Activated naive CD4-positive, alpha-beta T cell treated with anti-CD3 and anti-CD28 coated beads for 36 hours (primary cell): ENCODE measurements at regions of chr2 and their contacts with region 1.

Region 1: DNA sequence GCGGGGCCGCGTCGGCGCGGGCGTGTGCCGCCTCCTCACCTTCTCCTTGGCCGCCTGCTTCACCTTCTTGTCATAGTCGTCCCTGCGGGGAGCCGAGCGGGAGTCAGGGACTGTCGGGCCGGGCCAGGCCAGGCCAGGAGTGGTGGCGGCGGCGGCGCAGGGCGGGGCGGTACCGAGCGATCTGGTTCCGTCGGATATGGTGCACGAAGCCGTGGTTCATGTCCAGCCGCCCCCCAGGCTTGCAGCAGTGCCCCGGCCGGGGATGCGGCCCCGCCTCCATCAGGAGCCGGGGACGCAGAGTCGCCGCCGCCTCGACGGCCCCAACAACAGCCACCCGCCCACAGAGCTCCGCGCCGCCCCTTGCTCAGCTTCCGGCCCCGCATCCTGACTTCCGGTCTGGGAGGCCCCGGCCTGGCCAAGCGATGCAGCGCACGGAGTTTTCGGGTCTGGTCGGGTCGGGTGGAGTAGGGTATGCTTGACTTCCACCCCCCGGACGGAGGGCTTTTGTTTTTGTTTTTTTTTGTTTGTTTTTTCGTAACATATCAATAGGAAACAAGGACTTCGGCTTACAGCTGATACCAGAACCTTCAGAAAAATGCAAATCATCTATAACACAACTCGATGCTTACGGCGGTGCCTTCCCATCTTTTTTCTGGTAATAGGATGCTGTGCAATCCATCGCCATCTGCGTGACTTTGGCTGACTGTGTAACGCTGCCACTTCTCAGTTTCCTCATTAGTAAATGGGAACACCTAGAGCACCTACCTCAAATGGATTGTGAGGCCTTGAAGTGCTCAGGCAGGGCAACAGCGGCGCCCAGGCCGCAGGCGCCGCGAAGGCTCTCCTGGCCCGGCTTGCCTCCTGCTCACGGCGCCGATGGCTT is at the start of gene C2orf68:
- DNase-seq: peak; percentile 93
- H3K4me3 Mint-ChIP-seq: peak within 1 kb of the TSS; percentile 98
- H3K27ac Mint-ChIP-seq: peak within 1 kb of the TSS; percentile 94
- H3K4me1 Mint-ChIP-seq: peaks cover 25% of the 10 kb centered on the region
- H3K27me3 Mint-ChIP-seq: no peaks in the 10 kb centered on the region
- total RNA-seq, gene C2orf68: 29.3 to 31.0 TPM

Region 2: DNA sequence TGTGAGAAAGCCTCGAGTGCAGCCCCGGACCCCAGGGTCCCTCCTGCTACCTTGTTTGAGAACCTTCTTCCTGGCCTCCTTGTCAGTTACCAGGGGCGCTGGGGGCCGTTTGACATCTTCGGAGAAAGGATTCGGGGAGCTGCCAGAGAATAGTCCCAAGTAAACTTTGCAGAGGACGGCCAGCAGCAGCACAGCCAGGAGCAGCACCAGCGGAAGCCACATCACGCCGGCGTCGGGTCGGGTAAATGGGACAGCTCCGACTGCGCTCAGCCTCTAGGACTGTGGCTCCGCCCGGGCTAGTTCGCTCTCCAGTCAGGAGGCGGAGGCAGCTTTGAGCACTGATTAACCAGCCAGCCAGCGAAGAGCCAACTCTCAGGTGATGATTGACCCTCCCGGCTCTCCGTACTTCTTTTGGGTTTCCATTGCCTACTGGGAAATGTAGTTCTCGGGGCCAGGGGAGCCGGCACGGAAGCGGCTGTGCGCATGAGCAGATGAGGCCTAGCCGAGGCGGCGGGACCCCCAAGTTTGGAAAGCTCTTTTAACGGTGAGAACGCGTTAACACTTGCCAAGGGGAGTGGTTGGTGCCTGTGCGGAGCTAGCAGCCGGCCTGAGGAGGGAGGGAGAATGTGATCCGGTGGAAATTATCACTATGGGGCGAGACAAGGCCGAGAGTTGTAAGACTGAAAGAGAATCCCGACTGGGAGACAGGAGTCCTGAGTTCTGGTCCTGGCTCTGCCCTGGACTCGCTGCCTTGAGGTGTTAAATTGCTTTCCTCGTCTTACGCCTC is 257.5 kb before region 1 on chr2 and contains the starts of genes ELMOD3 and RETSAT:
- CTCF ChIA-PET with region 1: no interaction called
- intact Hi-C with region 1: loop called (anchors 1 kb)
- DNase-seq: peak; percentile 99
- H3K4me3 Mint-ChIP-seq: peak within 1 kb of the TSS; percentile 99
- H3K27ac Mint-ChIP-seq: peak within 1 kb of the TSS; percentile 96
- H3K4me1 Mint-ChIP-seq: peaks cover 36% of the 10 kb centered on the region
- H3K27me3 Mint-ChIP-seq: no peaks in the 10 kb centered on the region
- total RNA-seq, gene ELMOD3: 14.8 to 15.4 TPM
- total RNA-seq, gene RETSAT: 19.7 to 24.5 TPM

Region 3: DNA sequence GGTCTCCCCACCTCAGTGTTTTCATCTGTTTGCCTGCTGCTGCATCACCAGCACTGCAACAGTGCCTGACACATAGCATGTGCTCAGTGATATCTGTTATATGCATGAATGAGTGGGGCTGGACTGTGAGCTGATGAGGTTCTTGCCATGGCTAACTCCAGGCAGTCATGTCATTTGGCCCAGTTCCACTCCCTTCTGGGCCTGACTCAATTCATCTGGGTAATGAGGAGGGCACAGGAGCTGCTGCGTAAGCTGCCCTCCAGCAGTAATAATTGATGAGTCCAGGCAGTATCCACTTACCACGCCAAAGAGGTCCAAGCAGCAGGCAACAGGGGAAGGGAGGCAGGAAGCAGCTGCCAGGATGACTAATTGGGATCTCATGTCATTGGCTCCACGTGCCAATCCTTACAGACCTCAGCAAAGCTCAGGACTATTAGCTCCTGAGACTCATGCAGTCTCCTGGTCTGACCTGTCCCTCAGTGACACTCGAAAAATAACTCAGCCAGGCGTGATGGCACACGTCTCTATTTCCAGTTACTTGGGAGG is 107.1 kb before region 1 on chr2:
- CTCF ChIA-PET with region 1: no interaction called
- intact Hi-C with region 1: no loop called
- DNase-seq: no peak
- H3K4me3 Mint-ChIP-seq: no peak overlapping the region
- H3K27ac Mint-ChIP-seq: no peak overlapping the region
- H3K4me1 Mint-ChIP-seq: no peaks in the 10 kb centered on the region
- H3K27me3 Mint-ChIP-seq: no peaks in the 10 kb centered on the region

Region 4: GRCh38 chr2:85538486-85539360 is 73.2 kb before region 1 on chr2 and contains the start of gene MAT2A:
- CTCF ChIA-PET with region 1: interaction called, 4 read pairs
- intact Hi-C with region 1: loop called (anchors 1 kb)
- DNase-seq: peak; percentile 94
- H3K4me3 Mint-ChIP-seq: peak within 1 kb of the TSS; percentile 91
- H3K27ac Mint-ChIP-seq: peak within 1 kb of the TSS; percentile 99
- H3K4me1 Mint-ChIP-seq: peaks cover 36% of the 10 kb centered on the region
- H3K27me3 Mint-ChIP-seq: no peaks in the 10 kb centered on the region
- total RNA-seq, gene MAT2A: 221 to 228 TPM

Region 5: DNA sequence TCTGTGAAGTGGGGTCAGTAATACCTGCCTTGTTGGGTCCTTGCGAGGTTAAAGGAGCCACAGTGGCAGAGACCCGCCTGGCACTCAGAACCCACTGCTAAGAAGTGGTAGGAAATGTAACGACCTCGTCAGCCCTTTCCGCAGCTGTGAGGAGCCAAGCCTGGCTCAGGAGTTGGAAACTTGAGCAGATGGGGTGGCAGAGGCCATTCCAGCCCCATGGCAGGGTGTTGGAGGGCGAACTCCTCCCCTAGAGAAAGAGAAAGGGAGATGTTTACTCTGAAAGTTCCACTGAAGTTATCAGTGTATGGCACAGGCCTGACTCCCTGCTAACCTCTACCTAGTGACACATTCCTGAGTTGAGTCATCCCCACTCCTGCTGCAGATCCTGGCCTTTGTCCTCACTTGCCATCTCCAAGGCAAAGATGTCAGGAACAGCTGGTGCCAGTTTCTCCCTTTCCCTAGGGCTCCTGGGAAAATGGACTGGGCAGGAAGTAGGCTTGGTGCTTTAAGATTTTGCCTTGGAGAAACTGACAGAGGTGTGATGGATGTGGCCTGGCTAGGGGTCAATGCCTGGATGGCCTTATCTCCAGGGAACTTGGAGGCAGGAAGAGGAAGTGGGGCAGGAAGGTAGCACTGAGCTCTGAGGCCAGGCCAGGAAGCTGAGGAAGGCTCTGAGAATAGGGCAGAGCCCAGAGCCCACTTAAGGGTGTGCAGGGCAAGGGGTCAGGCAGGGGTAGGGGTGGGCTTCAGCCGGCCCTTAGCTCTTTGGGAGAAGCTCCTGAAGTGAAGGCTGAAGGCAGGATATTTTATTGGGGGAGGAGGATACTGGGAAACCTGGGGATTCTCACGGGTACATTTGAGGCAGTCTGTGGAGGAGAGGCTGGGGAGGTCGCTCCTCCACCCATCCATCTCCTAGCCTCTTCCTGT is 26.8 kb before region 1 on chr2:
- CTCF ChIA-PET with region 1: no interaction called
- intact Hi-C with region 1: loop called (anchors 2 kb)
- DNase-seq: peak; percentile 50
- H3K4me3 Mint-ChIP-seq: peak overlapping the region; percentile 79
- H3K27ac Mint-ChIP-seq: peak overlapping the region; percentile 83
- H3K4me1 Mint-ChIP-seq: peaks cover 40% of the 10 kb centered on the region
- H3K27me3 Mint-ChIP-seq: no peaks in the 10 kb centered on the region

Region 6: GRCh38 chr2:86105252-86105968 is 493.5 kb after region 1 on chr2 and contains the start of gene POLR1A:
- CTCF ChIA-PET with region 1: no interaction called
- intact Hi-C with region 1: loop called (anchors 10 kb)
- DNase-seq: peak; percentile 87
- H3K4me3 Mint-ChIP-seq: peak within 1 kb of the TSS; percentile 89
- H3K27ac Mint-ChIP-seq: peak within 1 kb of the TSS; percentile 99
- H3K4me1 Mint-ChIP-seq: peaks cover 57% of the 10 kb centered on the region
- H3K27me3 Mint-ChIP-seq: no peaks in the 10 kb centered on the region
- total RNA-seq, gene POLR1A: 25.3 to 27.1 TPM